Mammary epithelial cell (primary cell): ENCODE measurements at regions of chr17 and their contacts with region 1.

Region 1: DNA sequence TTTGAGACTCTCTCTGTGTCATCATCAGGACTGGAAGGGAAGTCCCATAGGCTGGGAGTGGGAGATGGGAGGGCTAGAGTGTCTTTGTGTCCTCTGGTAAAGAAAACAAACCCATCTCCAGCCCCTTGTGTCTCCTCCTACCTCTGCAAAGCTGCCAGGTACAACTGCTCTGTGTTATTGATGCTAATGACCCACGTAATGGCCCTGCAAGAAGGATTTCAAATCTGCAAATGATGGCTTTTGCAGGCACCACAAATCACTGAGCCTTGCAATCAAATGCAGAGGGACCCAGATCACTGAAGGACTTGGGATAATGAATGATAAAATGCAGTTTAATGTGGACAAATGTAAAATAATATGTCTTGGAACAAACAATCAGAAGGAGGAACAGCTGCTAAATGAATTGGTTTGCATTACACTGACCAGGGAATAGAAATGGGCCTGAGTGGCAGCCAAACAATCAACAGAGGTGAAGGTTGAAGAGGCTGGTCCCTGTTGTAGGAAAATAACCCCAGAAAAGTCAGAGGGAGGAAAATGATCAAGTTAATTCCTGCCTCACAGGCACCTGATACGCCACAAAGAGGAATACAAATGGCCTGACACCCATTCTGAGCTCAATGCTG is 425.1 kb downstream of the UTP18 start:
- DNase-seq: no peak
- H3K4me3 ChIP-seq: no peak overlapping the region
- H3K27ac ChIP-seq: no peak overlapping the region
- H3K4me1 ChIP-seq: no peaks in the 10 kb centered on the region
- H3K27me3 ChIP-seq: no peaks in the 10 kb centered on the region
- CTCF ChIP-seq: no peak

Region 2: GRCh38 chr17:51275381-51275780 is 410.0 kb before region 1 on chr17:
- CTCF ChIA-PET with region 1: no interaction called
- dilution Hi-C with region 1: no loop called
- in situ Hi-C with region 1: no loop called
- intact Hi-C with region 1: no loop called
- DNase-seq: no peak
- H3K4me3 ChIP-seq: no peak overlapping the region
- H3K27ac ChIP-seq: no peak overlapping the region
- H3K4me1 ChIP-seq: no peaks in the 10 kb centered on the region
- H3K27me3 ChIP-seq: no peaks in the 10 kb centered on the region
- CTCF ChIP-seq: no peak

Region 3: GRCh38 chr17:51630101-51630671 is 55.2 kb before region 1 on chr17:
- CTCF ChIA-PET with region 1: no interaction called
- dilution Hi-C with region 1: loop called (anchors 10 kb)
- in situ Hi-C with region 1: no loop called
- intact Hi-C with region 1: no loop called
- DNase-seq: no peak
- H3K4me3 ChIP-seq: no peak overlapping the region
- H3K27ac ChIP-seq: no peak overlapping the region
- H3K4me1 ChIP-seq: no peaks in the 10 kb centered on the region
- H3K27me3 ChIP-seq: no peaks in the 10 kb centered on the region
- CTCF ChIP-seq: no peak

Region 4: GRCh38 chr17:51699297-51699696 is 13.9 kb after region 1 on chr17:
- CTCF ChIA-PET with region 1: no interaction called
- dilution Hi-C with region 1: no loop called
- in situ Hi-C with region 1: no loop called
- intact Hi-C with region 1: no loop called
- DNase-seq: no peak
- H3K4me3 ChIP-seq: no peak overlapping the region
- H3K27ac ChIP-seq: no peak overlapping the region
- H3K4me1 ChIP-seq: peaks cover 10% of the 10 kb centered on the region
- H3K27me3 ChIP-seq: no peaks in the 10 kb centered on the region
- CTCF ChIP-seq: no peak